ENCODE measurements at regions of chr9 and their contacts with region 1.

Region 1: GRCh38 chr9:128920381-128921058 is at the start of gene PHYHD1:
- DNase-seq: no peak
- H3K4me3 ChIP-seq: no peak within 1 kb of the TSS
- H3K27ac ChIP-seq: no peak within 1 kb of the TSS
- H3K4me1 ChIP-seq: peaks cover 21% of the 10 kb centered on the region
- H3K27me3 ChIP-seq: no peaks in the 10 kb centered on the region
- CTCF ChIP-seq: no peak
- total RNA-seq, gene PHYHD1: 2.5 to 4.7 TPM

Region 2: DNA sequence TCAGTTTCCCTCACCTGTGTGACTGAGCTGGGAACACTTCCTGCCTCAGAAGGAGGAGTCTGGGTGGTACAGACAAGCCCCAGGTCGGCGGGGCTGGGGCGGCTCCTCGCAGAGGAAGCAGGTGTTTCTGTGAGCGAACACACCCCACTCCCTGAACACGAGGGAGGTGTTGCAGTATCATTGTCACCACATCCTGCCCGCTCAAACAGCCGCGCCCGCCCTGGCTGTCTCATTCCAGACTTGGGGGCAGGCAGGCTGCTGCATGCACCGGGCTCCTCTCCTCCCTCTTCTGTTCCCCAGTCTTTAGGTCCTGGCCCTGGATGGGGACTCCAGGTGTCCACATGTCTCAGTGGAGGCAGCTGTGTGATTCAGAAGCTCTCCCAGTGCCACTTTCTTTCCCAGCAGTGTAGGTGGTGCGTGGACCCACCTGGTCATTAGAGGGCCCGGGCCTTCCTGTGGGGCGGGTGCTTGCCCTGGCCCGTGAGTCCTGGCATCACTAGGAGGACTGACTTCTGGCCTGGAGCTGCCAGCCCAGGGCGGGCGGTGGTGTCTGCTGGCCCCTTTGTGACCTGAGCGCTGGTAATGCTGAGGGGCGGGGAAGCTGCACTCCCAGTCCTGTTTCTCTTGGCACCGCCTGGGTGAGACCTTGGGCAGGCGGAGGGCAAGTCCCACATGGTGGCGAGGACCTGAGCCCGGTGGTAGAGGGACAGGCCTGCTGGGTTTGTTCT is 18.0 kb before region 1 on chr9:
- CTCF ChIA-PET with region 1: interaction called, 14 read pairs
- dilution Hi-C with region 1: no loop called
- in situ Hi-C with region 1: no loop called
- intact Hi-C with region 1: no loop called
- DNase-seq: peak; percentile 96
- H3K4me3 ChIP-seq: no peak overlapping the region
- H3K27ac ChIP-seq: peak overlapping the region; percentile 82
- H3K4me1 ChIP-seq: peaks cover 65% of the 10 kb centered on the region
- H3K27me3 ChIP-seq: no peaks in the 10 kb centered on the region
- CTCF ChIP-seq: no peak

Region 3: DNA sequence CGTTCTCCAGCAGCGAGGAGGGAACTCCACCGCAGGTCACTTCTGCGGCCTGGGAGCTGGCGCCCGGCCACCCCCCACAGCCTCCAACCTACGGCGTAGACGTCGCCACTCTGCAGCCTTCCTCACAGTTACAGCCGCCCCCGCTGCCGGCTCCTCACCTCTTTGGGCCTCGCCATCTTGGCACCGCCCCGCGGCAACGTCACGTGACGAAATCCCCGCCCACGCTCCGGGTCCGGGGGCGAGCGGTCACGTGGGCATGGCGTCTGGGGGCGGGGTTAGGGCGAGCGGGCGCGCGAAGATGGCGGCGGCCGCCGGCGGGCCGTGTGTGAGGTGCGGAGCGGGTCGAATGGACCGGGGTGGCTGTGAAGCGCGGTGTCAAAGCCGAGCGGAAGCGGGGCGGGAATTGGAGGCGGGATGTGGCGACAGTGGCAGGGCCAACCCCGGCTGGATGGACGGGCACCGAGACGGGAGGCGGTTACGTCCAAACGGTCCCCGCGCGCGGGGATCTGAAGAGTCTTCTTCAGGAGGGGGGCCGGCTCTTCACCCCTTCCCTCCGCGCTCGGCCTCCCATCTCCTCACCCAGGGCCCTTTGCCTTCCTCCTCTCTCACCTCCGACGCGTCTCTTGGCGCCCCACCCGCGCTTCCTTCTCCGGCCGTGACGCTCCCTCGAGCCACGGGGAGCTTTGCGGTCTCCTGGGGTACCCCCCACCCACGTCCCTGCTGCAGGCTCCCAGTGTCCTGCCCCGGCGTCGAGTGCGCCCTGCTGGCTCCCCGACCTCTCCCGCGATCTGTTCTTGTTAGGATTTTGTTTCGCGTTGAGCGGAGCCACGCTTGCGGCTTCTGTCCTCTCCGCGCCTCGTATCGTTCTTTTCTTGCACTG is 27.1 kb after region 1 on chr9 and contains the starts of genes DOLK and NUP188:
- CTCF ChIA-PET with region 1: no interaction called
- dilution Hi-C with region 1: no loop called
- in situ Hi-C with region 1: no loop called
- intact Hi-C with region 1: no loop called
- DNase-seq: peak; percentile 92
- H3K4me3 ChIP-seq: peak within 1 kb of the TSS; percentile 77 to 98 (median 82)
- H3K27ac ChIP-seq: peak within 1 kb of the TSS; percentile 84
- H3K4me1 ChIP-seq: peaks cover 13% of the 10 kb centered on the region
- H3K27me3 ChIP-seq: no peaks in the 10 kb centered on the region
- CTCF ChIP-seq: no peak
- total RNA-seq, gene DOLK: 22.0 TPM
- total RNA-seq, gene NUP188: 51.0 to 62.2 TPM

Region 4: GRCh38 chr9:129028192-129028957 is 107.9 kb after region 1 on chr9 and contains the start of gene SH3GLB2:
- CTCF ChIA-PET with region 1: interaction called, 11 read pairs
- dilution Hi-C with region 1: no loop called
- in situ Hi-C with region 1: no loop called
- intact Hi-C with region 1: no loop called
- DNase-seq: peak; percentile 86
- H3K4me3 ChIP-seq: peak within 1 kb of the TSS; percentile 43 to 86 (median 79)
- H3K27ac ChIP-seq: peak within 1 kb of the TSS; percentile 37
- H3K4me1 ChIP-seq: peaks cover 27% of the 10 kb centered on the region
- H3K27me3 ChIP-seq: no peaks in the 10 kb centered on the region
- CTCF ChIP-seq: peak; percentile 71 to 86
- total RNA-seq, gene SH3GLB2: 48.0 to 54.5 TPM

Measured in mammary epithelial cell (primary cell).